Transverse colon (tissue), 4 donors: ENCODE measurements at regions of chr11 and their contacts with region 1.

Region 1: DNA sequence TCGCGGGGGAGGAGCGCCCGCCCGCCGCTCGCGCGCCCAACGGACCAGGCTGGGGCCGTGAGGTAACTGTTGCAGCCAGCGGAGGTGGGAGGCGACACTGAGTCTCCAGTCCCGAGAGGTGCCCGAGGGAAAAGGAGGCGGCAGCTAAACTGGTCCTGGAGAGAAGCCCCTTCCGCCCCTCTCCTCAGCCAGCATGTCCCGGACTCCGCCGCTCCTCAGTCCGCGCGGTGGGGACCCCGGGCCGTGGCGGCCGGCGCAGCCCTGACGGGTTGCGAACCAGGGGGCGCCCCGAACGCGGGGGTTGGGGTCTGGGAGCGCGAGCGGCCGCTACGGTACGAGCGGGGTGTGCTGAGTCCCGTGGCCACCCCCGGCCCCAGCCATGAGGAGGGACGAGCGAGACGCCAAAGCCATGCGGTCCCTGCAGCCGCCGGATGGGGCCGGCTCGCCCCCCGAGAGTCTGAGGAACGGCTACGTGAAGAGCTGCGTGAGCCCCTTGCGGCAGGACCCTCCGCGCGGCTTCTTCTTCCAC is at the start of gene PDE3B:
- DNase-seq: peak; percentile 90
- H3K4me3 ChIP-seq: peak within 1 kb of the TSS; percentile 64 to 88 (median 74)
- H3K27ac ChIP-seq: peak within 1 kb of the TSS; percentile 91 to 96 (median 92)
- H3K4me1 ChIP-seq: peaks cover 9 to 55% (median 28%) of the 10 kb centered on the region in 4 donors
- H3K27me3 ChIP-seq: no peaks in the 10 kb centered on the region
- CTCF ChIP-seq: peak in 1 of 5 experiments; percentile 7
- EP300 ChIP-seq: no peak
- POLR2A ChIP-seq: peak; percentile 89
- total RNA-seq, gene PDE3B: 48.1 to 91.1 (median 66.1) TPM

Region 2: DNA sequence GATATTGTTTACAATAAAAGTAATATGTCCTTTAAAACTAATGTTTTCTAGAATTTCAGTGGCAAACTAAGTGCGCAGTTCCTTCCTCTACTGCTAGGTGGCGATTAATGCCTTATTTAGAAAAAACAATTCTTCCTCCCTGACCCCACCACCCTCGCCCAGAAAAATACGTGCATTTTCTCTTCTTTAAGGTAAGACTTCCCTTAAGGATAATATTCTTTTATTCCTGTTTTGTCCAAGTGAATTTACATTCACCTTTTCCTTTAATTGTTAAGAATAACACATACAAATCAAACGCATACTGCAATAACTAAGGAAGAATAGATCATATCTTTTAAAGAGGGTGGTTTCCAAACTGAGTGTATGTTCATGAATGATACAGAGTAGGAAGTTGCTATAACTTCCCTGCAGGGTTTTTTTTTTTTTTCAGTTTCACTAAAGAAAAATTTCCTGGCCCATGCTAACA is 106.6 kb before region 1 on chr11:
- in situ Hi-C with region 1: loop called in 2 of 4 experiments (anchors 10 to 25 kb)
- intact Hi-C with region 1: no loop called
- DNase-seq: peak; percentile 32
- H3K4me3 ChIP-seq: peak overlapping the region in 1 of 4 donors; percentile 20
- H3K27ac ChIP-seq: peak overlapping the region in 2 of 4 donors; percentile 59 to 70
- H3K4me1 ChIP-seq: peaks cover 0 to 43% (median 11%) of the 10 kb centered on the region in 4 donors
- H3K27me3 ChIP-seq: no peaks in the 10 kb centered on the region
- CTCF ChIP-seq: peak; percentile 81 to 92 (median 85)
- EP300 ChIP-seq: no peak
- POLR2A ChIP-seq: no peak

Region 3: GRCh38 chr11:14544611-14545010 is 99.2 kb before region 1 on chr11:
- in situ Hi-C with region 1: loop called in 2 of 4 experiments (anchors 10 to 25 kb)
- intact Hi-C with region 1: loop called (anchors 5 kb)
- DNase-seq: no peak
- H3K4me3 ChIP-seq: no peak overlapping the region
- H3K27ac ChIP-seq: peak overlapping the region in 3 of 4 donors; percentile 4 to 32 (median 16)
- H3K4me1 ChIP-seq: peaks cover 0 to 56% (median 23%) of the 10 kb centered on the region in 4 donors
- H3K27me3 ChIP-seq: no peaks in the 10 kb centered on the region
- CTCF ChIP-seq: no peak
- EP300 ChIP-seq: no peak
- POLR2A ChIP-seq: no peak

Region 4: GRCh38 chr11:14554959-14555358 is 88.8 kb before region 1 on chr11:
- in situ Hi-C with region 1: loop called in 1 of 4 experiments (anchors 10 kb)
- intact Hi-C with region 1: no loop called
- DNase-seq: no peak
- H3K4me3 ChIP-seq: no peak overlapping the region
- H3K27ac ChIP-seq: peak overlapping the region; percentile 43 to 80 (median 62)
- H3K4me1 ChIP-seq: peaks cover 3 to 15% (median 9%) of the 10 kb centered on the region in 4 donors
- H3K27me3 ChIP-seq: no peaks in the 10 kb centered on the region
- CTCF ChIP-seq: no peak
- EP300 ChIP-seq: peak; percentile 77
- POLR2A ChIP-seq: no peak

Region 5: GRCh38 chr11:14764579-14765527 is 121.1 kb after region 1 on chr11:
- in situ Hi-C with region 1: no loop called
- intact Hi-C with region 1: loop called (anchors 5 kb)
- DNase-seq: no peak
- H3K4me3 ChIP-seq: no peak overlapping the region
- H3K27ac ChIP-seq: peak overlapping the region in 2 of 4 donors; percentile 1 to 37
- H3K4me1 ChIP-seq: peaks cover 0 to 22% (median 0%) of the 10 kb centered on the region in 4 donors
- H3K27me3 ChIP-seq: no peaks in the 10 kb centered on the region
- CTCF ChIP-seq: no peak
- EP300 ChIP-seq: no peak
- POLR2A ChIP-seq: no peak

Region 6: GRCh38 chr11:14892036-14892567 is 248.3 kb after region 1 on chr11 and contains the start of gene CYP2R1:
- in situ Hi-C with region 1: loop called in 3 of 4 experiments (anchors 10 to 25 kb)
- intact Hi-C with region 1: no loop called
- DNase-seq: peak; percentile 98
- H3K4me3 ChIP-seq: peak within 1 kb of the TSS; percentile 55 to 78 (median 64)
- H3K27ac ChIP-seq: peak within 1 kb of the TSS; percentile 92 to 98 (median 95)
- H3K4me1 ChIP-seq: peaks cover 4 to 39% (median 9%) of the 10 kb centered on the region in 4 donors
- H3K27me3 ChIP-seq: no peaks in the 10 kb centered on the region
- CTCF ChIP-seq: no peak
- EP300 ChIP-seq: no peak
- POLR2A ChIP-seq: peak; percentile 86
- total RNA-seq, gene CYP2R1: 26.1 to 54.2 (median 44.6) TPM

Region 7: GRCh38 chr11:15278128-15278527 is 634.4 kb after region 1 on chr11:
- in situ Hi-C with region 1: no loop called
- intact Hi-C with region 1: no loop called
- DNase-seq: no peak
- H3K4me3 ChIP-seq: no peak overlapping the region
- H3K27ac ChIP-seq: no peak overlapping the region
- H3K4me1 ChIP-seq: no peaks in the 10 kb centered on the region
- H3K27me3 ChIP-seq: no peaks in the 10 kb centered on the region
- CTCF ChIP-seq: no peak
- EP300 ChIP-seq: no peak
- POLR2A ChIP-seq: no peak